ENCODE measurements at regions of chr10 and their contacts with region 1.

Region 1: GRCh38 chr10:88826388-88826787 is 23.9 kb downstream of the LIPM start:
- DNase-seq: no peak
- H3K4me3 ChIP-seq: peak overlapping the region; percentile 14
- H3K4me3 Mint-ChIP-seq: peak overlapping the region; percentile 0 to 62 (median 51)
- H3K27ac ChIP-seq: no peak overlapping the region
- H3K27ac Mint-ChIP-seq: peak overlapping the region; percentile 11 to 88 (median 78)
- H3K4me1 ChIP-seq: peaks cover 51% of the 10 kb centered on the region
- H3K4me1 Mint-ChIP-seq: peaks cover 59 to 91% (median 87%) of the 10 kb centered on the region in 3 donors
- H3K27me3 ChIP-seq: no peaks in the 10 kb centered on the region
- H3K27me3 Mint-ChIP-seq: no peaks in the 10 kb centered on the region

Region 2: DNA sequence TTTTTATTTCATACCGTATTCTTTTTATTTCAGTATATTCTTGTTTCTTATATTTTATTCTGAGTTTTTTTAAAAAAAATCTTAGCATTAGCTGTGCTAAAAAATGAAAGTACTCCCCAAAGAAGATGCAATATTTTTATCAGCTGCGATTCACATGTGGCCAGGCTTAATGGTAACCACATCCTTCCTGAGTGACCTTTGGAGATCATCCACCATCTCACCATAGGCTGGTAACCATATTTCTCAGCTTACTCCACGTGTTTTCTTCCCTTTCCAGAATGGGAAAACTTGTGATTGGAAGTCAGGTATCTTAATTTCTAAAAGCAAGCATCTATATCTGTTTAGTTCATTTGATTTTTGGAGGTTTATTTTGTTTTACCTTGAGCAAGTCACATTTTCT is 42.7 kb before region 1 on chr10:
- CTCF ChIA-PET with region 1: no interaction called
- POLR2A ChIA-PET with region 1: no interaction called
- DNase-seq: no peak
- H3K4me3 ChIP-seq: no peak overlapping the region
- H3K4me3 Mint-ChIP-seq: no peak overlapping the region
- H3K27ac ChIP-seq: no peak overlapping the region
- H3K27ac Mint-ChIP-seq: peak overlapping the region in 1 of 8 donors; percentile 2
- H3K4me1 ChIP-seq: no peaks in the 10 kb centered on the region
- H3K4me1 Mint-ChIP-seq: peaks cover 2 to 6% (median 4%) of the 10 kb centered on the region in 3 donors
- H3K27me3 ChIP-seq: no peaks in the 10 kb centered on the region
- H3K27me3 Mint-ChIP-seq: peaks cover 3 to 11% of the 10 kb centered on the region in 2 donors

Region 3: DNA sequence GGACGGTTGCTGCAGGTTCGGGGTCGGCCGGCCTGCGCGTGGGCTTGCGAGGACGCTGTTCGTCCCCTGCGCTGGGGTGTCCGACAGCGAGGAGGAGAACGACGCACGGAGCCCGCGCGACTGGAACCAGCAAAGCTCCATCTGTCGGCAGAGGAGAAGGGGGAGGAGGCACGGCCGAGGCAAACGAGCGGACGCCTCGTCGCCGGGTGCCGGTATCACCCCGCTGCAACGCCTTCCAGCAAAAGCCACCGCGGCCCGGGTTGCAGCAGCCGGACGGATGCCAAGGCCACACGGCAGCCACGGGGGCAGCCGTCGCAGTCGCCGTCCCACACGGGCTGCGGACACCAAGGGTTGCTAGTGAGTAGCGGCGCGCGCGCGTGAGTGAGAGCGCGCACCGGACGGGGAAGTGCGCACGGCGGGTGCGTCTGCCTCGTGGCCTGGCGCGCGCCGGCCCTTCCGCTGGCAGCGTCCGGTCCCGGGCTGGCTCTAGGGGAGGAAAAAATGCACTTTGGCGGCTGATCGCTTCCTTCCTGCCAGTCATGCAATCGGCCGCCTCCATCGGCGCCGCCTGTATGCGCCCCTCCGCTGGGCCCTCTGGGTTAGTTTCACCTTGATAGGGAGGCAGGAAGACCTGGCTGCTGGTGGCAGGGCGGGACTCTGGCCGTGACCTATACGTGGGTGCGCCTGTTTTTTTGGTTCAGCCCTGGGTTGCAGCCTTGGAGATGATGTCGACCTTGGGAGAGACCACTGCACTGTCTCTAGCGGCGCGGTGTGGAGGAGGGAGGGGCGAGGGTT is 54.1 kb after region 1 on chr10:
- CTCF ChIA-PET with region 1: interaction called, 6 read pairs
- POLR2A ChIA-PET with region 1: interaction called, 13 read pairs
- DNase-seq: peak; percentile 54 to 81 (median 73)
- H3K4me3 ChIP-seq: peak overlapping the region; percentile 74
- H3K4me3 Mint-ChIP-seq: peak overlapping the region; percentile 93 to 100 (median 98)
- H3K27ac ChIP-seq: peak overlapping the region; percentile 80
- H3K27ac Mint-ChIP-seq: peak overlapping the region; percentile 79 to 99 (median 96)
- H3K4me1 ChIP-seq: peaks cover 58% of the 10 kb centered on the region
- H3K4me1 Mint-ChIP-seq: peaks cover 57 to 67% (median 63%) of the 10 kb centered on the region in 3 donors
- H3K27me3 ChIP-seq: no peaks in the 10 kb centered on the region
- H3K27me3 Mint-ChIP-seq: no peaks in the 10 kb centered on the region

Measured in CD8-positive, alpha-beta memory T cell (primary cell).